Activated CD4-positive, alpha-beta memory T cell treated with anti-CD3 and anti-CD28 coated beads for 36 hours (primary cell): ENCODE measurements at regions of chr4 and their contacts with region 1.

Region 1: DNA sequence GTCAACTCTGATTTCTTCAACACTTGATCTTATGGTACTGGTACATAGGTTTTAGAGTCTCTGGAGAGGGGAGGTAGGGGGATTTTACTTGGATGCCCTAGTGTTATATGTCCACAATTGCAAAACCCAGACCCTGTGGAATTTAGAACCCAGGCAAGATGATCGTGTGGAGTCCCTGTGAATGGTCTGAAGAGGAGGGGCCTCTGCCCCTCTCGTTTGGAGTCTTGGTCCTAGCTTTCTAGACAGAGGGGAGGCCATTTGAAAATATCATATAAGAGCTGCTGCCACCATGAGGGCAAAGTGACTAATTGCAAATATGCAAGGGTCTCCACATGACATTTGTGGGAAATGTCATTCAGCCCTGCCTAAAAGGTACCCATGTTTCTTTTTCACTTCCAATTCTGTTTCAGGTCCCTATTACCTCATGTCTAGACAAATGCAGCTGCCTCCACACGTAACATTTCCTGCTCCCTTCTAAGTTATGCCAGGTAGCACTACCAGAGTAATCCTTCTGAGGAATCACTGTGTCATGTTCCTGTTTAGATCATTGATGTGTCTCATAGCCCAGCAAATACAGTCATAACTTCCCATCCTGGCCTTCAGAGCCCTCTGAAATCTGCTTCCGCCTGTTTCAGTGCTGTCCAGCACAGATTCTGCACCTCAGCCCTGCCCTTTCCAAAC is 126.8 kb downstream of the KLHL8 start:
- DNase-seq: peak; percentile 50
- H3K4me3 Mint-ChIP-seq: no peak overlapping the region
- H3K27ac Mint-ChIP-seq: peak overlapping the region; percentile 71
- H3K4me1 Mint-ChIP-seq: peaks cover 50% of the 10 kb centered on the region
- H3K27me3 Mint-ChIP-seq: no peaks in the 10 kb centered on the region

Region 2: GRCh38 chr4:86927843-86928395 is 165.7 kb before region 1 on chr4:
- CTCF ChIA-PET with region 1: interaction called, 176 read pairs
- POLR2A ChIA-PET with region 1: no interaction called
- intact Hi-C with region 1: loop called (anchors 1 kb)
- DNase-seq: peak; percentile 35
- H3K4me3 Mint-ChIP-seq: no peak overlapping the region
- H3K27ac Mint-ChIP-seq: peak overlapping the region; percentile 73
- H3K4me1 Mint-ChIP-seq: peaks cover 28% of the 10 kb centered on the region
- H3K27me3 Mint-ChIP-seq: no peaks in the 10 kb centered on the region

Region 3: GRCh38 chr4:86977621-86978184 is 115.9 kb before region 1 on chr4:
- CTCF ChIA-PET with region 1: no interaction called
- POLR2A ChIA-PET with region 1: no interaction called
- intact Hi-C with region 1: no loop called
- DNase-seq: peak; percentile 43
- H3K4me3 Mint-ChIP-seq: no peak overlapping the region
- H3K27ac Mint-ChIP-seq: peak overlapping the region; percentile 6
- H3K4me1 Mint-ChIP-seq: peaks cover 59% of the 10 kb centered on the region
- H3K27me3 Mint-ChIP-seq: no peaks in the 10 kb centered on the region

Region 4: GRCh38 chr4:87058356-87059073 is 35.1 kb before region 1 on chr4:
- CTCF ChIA-PET with region 1: interaction called, 7 read pairs
- POLR2A ChIA-PET with region 1: interaction called, 4 read pairs
- intact Hi-C with region 1: loop called (anchors 1 kb)
- DNase-seq: peak; percentile 81
- H3K4me3 Mint-ChIP-seq: peak overlapping the region; percentile 17
- H3K27ac Mint-ChIP-seq: peak overlapping the region; percentile 78
- H3K4me1 Mint-ChIP-seq: peaks cover 70% of the 10 kb centered on the region
- H3K27me3 Mint-ChIP-seq: no peaks in the 10 kb centered on the region

Region 5: DNA sequence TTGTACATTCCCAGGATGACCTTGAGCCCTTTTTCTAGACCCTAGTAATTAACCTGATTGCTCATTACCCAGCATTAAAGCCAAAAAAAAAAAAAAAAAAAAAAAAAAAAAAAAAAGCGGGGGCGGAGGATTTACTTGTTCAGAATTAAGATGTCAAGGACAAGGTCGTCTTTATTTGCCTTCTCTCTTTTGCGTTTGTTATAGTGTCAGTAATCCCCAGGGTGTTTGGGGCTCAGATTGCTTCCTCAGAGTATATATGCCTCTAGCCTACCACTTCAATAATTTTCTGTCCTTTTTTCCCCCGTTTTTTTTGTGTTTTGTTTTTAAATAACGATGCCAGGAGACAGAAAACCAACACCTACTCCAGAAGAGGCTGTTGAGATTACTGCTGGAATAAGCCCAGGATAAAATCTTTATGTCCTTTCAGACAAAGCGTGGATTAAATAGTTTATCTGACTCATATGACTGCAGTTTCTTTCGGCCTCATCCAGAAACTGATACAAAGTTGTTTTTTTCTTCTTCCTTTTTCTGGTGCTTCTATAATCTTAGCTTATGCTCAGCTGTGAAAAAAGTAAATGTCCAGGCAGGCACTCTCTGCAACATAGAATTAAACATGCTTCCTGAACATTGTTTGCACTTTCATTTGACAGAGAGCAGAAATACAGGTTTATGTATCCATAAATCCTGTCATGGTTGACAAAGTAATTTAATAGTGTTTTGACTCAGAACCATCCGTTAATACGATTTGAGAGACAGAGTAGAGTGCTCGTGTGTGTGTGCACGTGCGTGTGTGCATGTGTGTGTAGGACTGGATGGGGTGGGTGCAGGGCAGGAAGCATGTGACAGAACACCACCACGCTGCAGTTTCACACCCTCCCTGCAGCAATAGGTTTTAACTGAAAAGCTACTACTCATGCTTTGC is 20.1 kb before region 1 on chr4:
- CTCF ChIA-PET with region 1: interaction called, 4 read pairs
- POLR2A ChIA-PET with region 1: interaction called, 10 read pairs
- intact Hi-C with region 1: loop called (anchors 1 kb)
- DNase-seq: peak; percentile 80
- H3K4me3 Mint-ChIP-seq: peak overlapping the region; percentile 54
- H3K27ac Mint-ChIP-seq: peak overlapping the region; percentile 71
- H3K4me1 Mint-ChIP-seq: peaks cover 49% of the 10 kb centered on the region
- H3K27me3 Mint-ChIP-seq: no peaks in the 10 kb centered on the region

Region 6: GRCh38 chr4:87103691-87104187 is 10.2 kb after region 1 on chr4:
- CTCF ChIA-PET with region 1: interaction called, 14 read pairs
- POLR2A ChIA-PET with region 1: no interaction called
- intact Hi-C with region 1: loop called (anchors 1 kb)
- DNase-seq: no peak
- H3K4me3 Mint-ChIP-seq: peak overlapping the region; percentile 57
- H3K27ac Mint-ChIP-seq: peak overlapping the region; percentile 84
- H3K4me1 Mint-ChIP-seq: peaks cover 72% of the 10 kb centered on the region
- H3K27me3 Mint-ChIP-seq: no peaks in the 10 kb centered on the region

Region 7: DNA sequence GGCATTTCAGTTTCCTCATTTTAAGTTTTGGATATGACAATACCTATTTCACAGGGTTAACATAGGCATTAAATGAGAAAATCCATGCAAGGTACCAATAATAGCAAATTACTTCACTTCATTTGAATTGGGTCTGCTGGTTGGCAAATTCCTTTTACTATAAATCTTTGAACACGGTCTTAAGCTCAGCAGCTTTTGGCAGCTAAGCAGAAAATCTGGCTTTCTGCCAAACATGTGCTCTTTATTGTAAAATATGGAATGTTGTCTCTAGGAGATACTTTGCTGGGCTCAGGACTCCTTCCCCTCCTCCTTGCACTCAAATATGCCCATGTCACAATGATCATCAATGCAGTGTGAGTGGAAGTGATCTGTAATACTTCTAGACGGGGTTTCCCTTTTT is 539.7 kb after region 1 on chr4:
- CTCF ChIA-PET with region 1: no interaction called
- POLR2A ChIA-PET with region 1: no interaction called
- intact Hi-C with region 1: no loop called
- DNase-seq: no peak
- H3K4me3 Mint-ChIP-seq: no peak overlapping the region
- H3K27ac Mint-ChIP-seq: no peak overlapping the region
- H3K4me1 Mint-ChIP-seq: no peaks in the 10 kb centered on the region
- H3K27me3 Mint-ChIP-seq: peaks cover 3% of the 10 kb centered on the region